Ascending aorta (tissue), 2 donors: ENCODE measurements at regions of chr10 and their contacts with region 1.

Region 1: GRCh38 chr10:31928549-31929260 is at the start of gene ARHGAP12:
- DNase-seq: peak; percentile 72 to 94
- H3K4me3 ChIP-seq: peak within 1 kb of the TSS; percentile 85 to 98
- H3K27ac ChIP-seq: peak within 1 kb of the TSS; percentile 95 to 96
- H3K4me1 ChIP-seq: peaks cover 0 to 19% of the 10 kb centered on the region in 2 donors
- H3K27me3 ChIP-seq: no peaks in the 10 kb centered on the region
- CTCF ChIP-seq: no peak
- total RNA-seq, gene ARHGAP12: 11.4 TPM

Region 2: GRCh38 chr10:31709028-31709427 is 219.7 kb before region 1 on chr10:
- intact Hi-C with region 1: no loop called
- DNase-seq: no peak
- H3K4me3 ChIP-seq: no peak overlapping the region
- H3K27ac ChIP-seq: peak overlapping the region; percentile 71 to 78
- H3K4me1 ChIP-seq: peaks cover 11 to 15% of the 10 kb centered on the region in 2 donors
- H3K27me3 ChIP-seq: no peaks in the 10 kb centered on the region
- CTCF ChIP-seq: peak in 2 of 3 experiments; percentile 14 to 41

Region 3: DNA sequence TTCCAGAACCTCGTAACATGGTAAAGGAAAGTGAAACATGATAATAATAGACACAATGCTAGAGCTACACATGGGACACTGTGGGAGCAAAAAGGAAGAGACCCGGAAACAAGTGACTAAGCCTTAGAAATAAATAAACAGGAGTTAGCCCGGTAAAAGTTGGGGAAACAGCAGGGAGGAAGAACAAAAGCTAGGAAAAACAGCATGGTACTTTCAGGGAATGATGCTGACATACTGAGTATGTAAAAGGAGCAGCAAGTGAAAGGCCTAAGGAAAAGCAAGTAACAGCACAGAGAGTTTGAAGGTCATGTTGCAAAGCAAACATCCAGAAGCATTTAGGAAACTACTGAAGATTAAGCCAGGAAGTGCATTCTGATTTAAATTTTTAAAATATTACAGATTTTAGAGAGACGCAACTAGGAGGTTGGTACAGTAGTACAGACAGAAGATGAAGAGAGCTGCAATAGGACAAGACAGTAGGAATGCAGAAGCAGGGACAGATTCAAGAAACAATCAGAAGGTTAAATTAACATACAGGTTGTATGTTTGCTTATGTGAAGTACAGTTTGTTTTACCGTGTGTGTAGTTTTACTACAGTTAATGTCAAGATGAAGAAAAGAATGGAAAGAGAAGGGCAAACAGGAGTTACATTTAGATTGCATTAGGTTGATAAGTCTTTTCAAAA is 63.7 kb before region 1 on chr10:
- intact Hi-C with region 1: loop called (anchors 5 kb)
- DNase-seq: no peak
- H3K4me3 ChIP-seq: no peak overlapping the region
- H3K27ac ChIP-seq: no peak overlapping the region
- H3K4me1 ChIP-seq: peaks cover 3 to 10% of the 10 kb centered on the region in 2 donors
- H3K27me3 ChIP-seq: no peaks in the 10 kb centered on the region
- CTCF ChIP-seq: no peak

Region 4: DNA sequence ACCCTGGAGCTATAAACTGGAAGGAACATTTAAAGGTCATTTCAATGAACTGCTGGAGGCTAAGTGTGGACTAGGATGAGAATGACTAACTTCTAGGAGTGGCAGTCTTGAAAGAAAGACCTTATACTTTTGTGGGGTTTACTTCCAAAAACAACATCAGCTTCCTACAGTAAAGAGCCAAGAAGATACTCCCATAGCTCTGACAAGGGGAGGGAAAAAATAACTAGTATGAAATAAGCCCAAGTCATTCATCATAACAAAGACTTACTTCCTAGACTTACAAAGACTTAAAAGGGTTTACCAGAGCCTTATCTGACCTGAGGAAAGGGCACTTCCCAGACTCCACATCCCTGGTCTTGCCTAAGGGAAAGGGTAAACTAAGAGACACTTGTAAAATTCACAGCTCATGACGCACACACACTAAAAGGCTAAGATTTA is 31.7 kb before region 1 on chr10:
- intact Hi-C with region 1: loop called (anchors 1 kb)
- DNase-seq: no peak
- H3K4me3 ChIP-seq: no peak overlapping the region
- H3K27ac ChIP-seq: peak overlapping the region; percentile 6 to 51
- H3K4me1 ChIP-seq: peaks cover 0 to 13% of the 10 kb centered on the region in 2 donors
- H3K27me3 ChIP-seq: no peaks in the 10 kb centered on the region
- CTCF ChIP-seq: no peak

Region 5: DNA sequence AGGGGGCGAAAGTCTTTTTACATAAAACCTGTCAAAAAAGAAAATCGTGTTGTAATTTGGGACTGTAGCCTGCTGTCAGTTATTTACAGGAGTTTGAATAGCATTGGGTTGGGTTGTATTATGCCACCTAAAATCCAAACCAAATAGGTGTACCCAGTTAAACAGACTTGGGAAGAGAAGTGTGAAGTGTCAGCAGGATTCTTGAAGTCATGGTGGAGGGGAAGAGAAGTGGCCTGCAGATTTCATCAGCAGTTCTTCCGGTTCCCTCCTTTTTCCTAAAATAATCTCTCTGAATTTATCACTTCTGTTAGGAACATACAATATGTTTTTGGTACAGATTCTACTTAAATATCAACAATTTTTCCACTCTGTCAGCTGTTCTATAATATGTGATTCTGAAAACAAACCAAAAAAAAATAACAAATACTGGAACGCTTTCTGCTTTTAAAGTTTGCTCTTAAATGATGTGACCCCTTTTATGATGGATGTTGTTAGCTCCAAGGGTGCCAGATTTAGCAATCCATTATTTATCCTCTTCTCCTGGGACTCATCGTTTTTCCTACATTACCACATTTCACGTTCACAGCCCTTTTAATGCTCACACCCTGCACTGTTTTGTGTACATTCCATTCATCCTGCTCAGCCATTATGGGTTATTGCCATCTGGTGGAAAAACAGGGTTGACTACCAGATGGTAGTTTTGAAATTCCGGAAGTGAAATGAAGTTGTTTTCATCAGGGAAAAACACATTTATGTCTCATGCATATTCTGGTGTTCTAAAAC is 18.6 kb after region 1 on chr10:
- intact Hi-C with region 1: loop called (anchors 2 kb)
- DNase-seq: no peak
- H3K4me3 ChIP-seq: peak overlapping the region in 1 of 2 donors; percentile 41
- H3K27ac ChIP-seq: peak overlapping the region; percentile 28 to 60
- H3K4me1 ChIP-seq: peaks cover 0 to 13% of the 10 kb centered on the region in 2 donors
- H3K27me3 ChIP-seq: no peaks in the 10 kb centered on the region
- CTCF ChIP-seq: peak; percentile 29 to 57 (median 30)

Region 6: DNA sequence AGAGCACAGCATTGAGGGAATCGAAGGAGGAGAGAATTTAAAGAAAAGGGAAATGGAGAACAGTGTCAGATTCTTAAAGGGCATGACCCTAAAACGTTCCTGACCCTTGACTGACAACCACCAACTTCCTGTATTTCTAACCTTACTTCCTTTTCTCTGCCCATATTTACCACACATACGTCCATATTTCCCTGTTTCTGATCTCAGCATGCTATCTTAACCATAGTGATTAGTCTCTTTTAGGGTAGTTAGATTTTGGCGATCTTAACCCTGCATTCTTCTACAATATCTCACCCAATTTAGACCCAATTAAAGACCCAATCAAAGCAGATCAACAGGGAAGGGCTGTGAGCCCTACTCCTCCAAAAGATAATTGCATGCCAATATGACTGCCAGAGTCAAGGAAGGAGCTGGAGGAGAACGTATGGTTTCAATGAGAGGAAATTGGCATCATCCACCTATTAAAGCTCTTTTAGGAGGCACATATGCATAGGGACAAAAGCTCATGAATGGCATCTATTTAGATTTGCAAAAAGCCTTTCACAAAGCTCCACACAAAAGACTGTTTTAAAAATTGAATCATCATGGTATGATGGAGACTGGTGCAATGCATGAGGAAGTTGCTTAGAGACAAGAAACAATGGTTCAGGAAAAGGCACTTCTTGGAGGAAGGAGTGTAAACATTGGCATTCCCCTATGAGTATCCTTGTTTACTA is 48.9 kb after region 1 on chr10:
- intact Hi-C with region 1: no loop called
- DNase-seq: no peak
- H3K4me3 ChIP-seq: no peak overlapping the region
- H3K27ac ChIP-seq: no peak overlapping the region
- H3K4me1 ChIP-seq: no peaks in the 10 kb centered on the region
- H3K27me3 ChIP-seq: no peaks in the 10 kb centered on the region
- CTCF ChIP-seq: no peak

Region 7: DNA sequence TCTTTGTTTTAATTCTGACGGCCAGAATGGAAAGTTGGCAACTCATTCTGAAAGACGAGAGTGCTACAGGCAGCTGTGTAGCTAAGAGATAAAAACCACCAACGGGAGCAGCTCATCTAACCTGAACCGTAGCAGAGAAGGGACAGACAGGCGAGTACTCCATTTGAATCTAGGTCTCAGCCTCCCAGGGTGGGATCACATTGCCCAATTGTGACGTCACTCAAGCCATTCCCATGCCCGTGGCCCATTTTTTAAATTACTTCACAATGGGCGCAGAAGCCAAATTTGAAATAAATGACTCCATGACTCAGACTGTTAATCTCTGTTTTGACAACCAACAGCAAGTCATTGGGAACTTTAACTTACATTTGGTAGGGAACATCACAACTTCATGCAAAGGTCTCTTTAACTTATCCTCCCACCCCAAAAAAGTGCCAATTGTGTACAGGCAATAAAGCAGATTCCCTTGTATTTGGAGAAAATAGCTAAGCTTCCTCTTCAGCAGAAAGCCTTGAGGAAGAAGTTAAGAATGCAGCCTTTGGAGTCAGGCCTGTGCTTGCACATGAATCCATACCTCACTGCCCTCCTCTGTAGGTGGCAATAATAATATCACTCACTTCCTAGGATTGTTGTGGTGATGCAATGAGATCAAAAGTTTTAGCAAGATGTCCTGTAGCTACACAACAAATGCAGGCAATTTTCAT is 220.7 kb after region 1 on chr10:
- intact Hi-C with region 1: loop called (anchors 5 kb)
- DNase-seq: peak; percentile 19 to 93
- H3K4me3 ChIP-seq: peak overlapping the region; percentile 27 to 40
- H3K27ac ChIP-seq: peak overlapping the region; percentile 81 to 91
- H3K4me1 ChIP-seq: peaks cover 0 to 18% of the 10 kb centered on the region in 2 donors
- H3K27me3 ChIP-seq: no peaks in the 10 kb centered on the region
- CTCF ChIP-seq: no peak